Testis (tissue), 5 donors: ENCODE measurements at regions of chr6 and their contacts with region 1.

Region 1: GRCh38 chr6:43828711-43829110 is 58.7 kb downstream of the VEGFA start:
- DNase-seq: peak; percentile 43
- H3K4me3 ChIP-seq: no peak overlapping the region
- H3K27ac ChIP-seq: no peak overlapping the region
- H3K4me1 ChIP-seq: peaks cover 3% of the 10 kb centered on the region
- H3K27me3 ChIP-seq: no peaks in the 10 kb centered on the region
- CTCF ChIP-seq: no peak
- POLR2A ChIP-seq: no peak

Region 2: GRCh38 chr6:43613721-43614393 is 214.9 kb before region 1 on chr6:
- intact Hi-C with region 1: loop called (anchors 5 kb)
- DNase-seq: no peak
- H3K4me3 ChIP-seq: no peak overlapping the region
- H3K27ac ChIP-seq: no peak overlapping the region
- H3K4me1 ChIP-seq: no peaks in the 10 kb centered on the region
- H3K27me3 ChIP-seq: no peaks in the 10 kb centered on the region
- CTCF ChIP-seq: no peak
- POLR2A ChIP-seq: no peak